Breast epithelium (tissue), 4 donors: ENCODE measurements at regions of chr11 and their contacts with region 1.

Region 1: DNA sequence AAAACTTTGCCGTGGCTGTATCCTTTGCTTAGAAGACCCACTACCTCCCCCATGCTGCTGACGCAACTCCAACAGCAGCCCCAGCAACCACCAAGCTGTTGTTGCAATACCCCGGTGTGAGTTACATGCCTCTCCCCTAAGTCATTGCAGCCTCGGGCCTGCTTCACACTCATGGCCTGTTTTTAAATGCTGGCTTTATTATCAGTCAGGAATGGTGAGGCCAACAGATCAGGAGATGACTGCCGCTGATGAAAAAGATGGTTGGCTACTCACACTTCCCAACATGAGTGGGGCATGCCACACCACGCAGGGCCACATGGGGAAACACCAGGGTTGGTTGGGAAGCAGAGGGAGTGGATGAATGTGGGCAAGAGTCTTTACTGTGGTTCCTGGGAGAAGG is 171.5 kb upstream of the SYT13 start:
- DNase-seq: no peak
- H3K4me3 ChIP-seq: no peak overlapping the region
- H3K27ac ChIP-seq: no peak overlapping the region
- H3K4me1 ChIP-seq: no peaks in the 10 kb centered on the region
- H3K27me3 ChIP-seq: no peaks in the 10 kb centered on the region
- CTCF ChIP-seq: no peak
- POLR2A ChIP-seq: no peak

Region 2: DNA sequence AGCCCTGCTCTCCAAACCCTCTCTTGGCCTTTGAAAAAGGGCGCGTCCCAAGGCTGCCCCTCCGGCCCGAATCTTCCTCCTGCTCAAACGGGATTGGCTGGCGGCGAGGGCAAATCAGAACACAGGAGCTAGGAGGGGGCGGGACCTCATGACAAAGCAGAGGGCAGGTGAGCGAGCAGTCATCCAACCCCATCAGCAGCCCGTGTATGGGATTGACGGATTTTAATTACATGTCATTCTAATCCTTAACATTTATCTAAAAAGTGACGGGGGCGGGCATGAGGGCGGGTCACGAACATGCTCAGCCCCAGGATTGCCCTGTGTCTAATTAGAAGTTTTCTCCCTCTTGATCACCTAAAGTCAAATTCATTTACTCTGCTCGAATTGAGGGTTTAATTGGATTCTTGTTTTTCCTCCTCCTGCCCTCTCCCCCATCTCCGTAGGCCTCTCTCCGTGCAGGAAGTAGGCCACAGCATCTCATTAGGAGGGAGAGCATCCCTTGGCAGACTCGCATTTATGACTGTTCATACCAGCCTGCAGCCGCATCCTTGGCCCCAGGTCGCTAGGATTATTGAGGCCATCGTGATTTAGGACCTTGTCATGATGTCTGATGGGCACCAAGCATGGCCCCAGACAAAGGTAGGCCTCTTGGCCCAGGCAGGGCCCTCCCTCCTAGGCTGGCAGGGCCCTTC is 60.6 kb after region 1 on chr11:
- intact Hi-C with region 1: loop called (anchors 2 kb)
- DNase-seq: no peak
- H3K4me3 ChIP-seq: no peak overlapping the region
- H3K27ac ChIP-seq: no peak overlapping the region
- H3K4me1 ChIP-seq: no peaks in the 10 kb centered on the region
- H3K27me3 ChIP-seq: no peaks in the 10 kb centered on the region
- CTCF ChIP-seq: no peak
- POLR2A ChIP-seq: no peak

Region 3: GRCh38 chr11:46121724-46122477 is 664.3 kb after region 1 on chr11:
- intact Hi-C with region 1: no loop called
- DNase-seq: peak; percentile 64 to 68
- H3K4me3 ChIP-seq: peak overlapping the region; percentile 69 to 79 (median 73)
- H3K27ac ChIP-seq: peak overlapping the region; percentile 91 to 99
- H3K4me1 ChIP-seq: no peaks in the 10 kb centered on the region
- H3K27me3 ChIP-seq: no peaks in the 10 kb centered on the region
- CTCF ChIP-seq: no peak
- POLR2A ChIP-seq: no peak